Vagina (tissue), 2 donors: ENCODE measurements at regions of chr15 and their contacts with region 1.

Region 1: DNA sequence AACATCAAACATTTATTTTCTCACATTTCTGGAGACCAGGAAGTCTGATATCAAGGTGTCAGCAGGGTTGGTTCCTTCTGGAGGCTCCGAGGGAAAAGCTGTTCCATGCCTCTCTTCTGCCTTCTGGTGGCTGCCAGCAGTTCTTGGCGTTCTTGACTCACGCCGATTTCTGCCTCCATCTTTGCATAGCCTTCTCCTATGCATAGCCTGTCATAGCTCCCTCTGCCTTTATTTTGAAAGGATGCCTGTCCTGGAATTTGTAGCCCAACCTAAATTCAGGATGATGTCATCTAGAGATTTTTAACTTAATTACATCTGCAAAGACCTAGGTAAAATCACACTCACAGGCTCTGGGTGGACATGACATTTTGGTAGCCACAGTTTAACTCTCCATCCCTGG is 70.4 kb downstream of the RGMA start:
- DNase-seq: no peak
- H3K4me3 ChIP-seq: no peak overlapping the region
- H3K27ac ChIP-seq: no peak overlapping the region
- H3K4me1 ChIP-seq: no peaks in the 10 kb centered on the region
- H3K27me3 ChIP-seq: no peaks in the 10 kb centered on the region
- CTCF ChIP-seq: no peak
- POLR2A ChIP-seq: no peak

Region 2: GRCh38 chr15:92733934-92734521 is 284.6 kb before region 1 on chr15:
- intact Hi-C with region 1: no loop called
- DNase-seq: no peak
- H3K4me3 ChIP-seq: peak overlapping the region in 1 of 2 donors; percentile 35
- H3K27ac ChIP-seq: peak overlapping the region; percentile 53
- H3K4me1 ChIP-seq: no peaks in the 10 kb centered on the region
- H3K27me3 ChIP-seq: no peaks in the 10 kb centered on the region
- CTCF ChIP-seq: no peak
- POLR2A ChIP-seq: no peak

Region 3: GRCh38 chr15:92954578-92954977 is 64.0 kb before region 1 on chr15:
- intact Hi-C with region 1: loop called (anchors 10 kb)
- DNase-seq: no peak
- H3K4me3 ChIP-seq: no peak overlapping the region
- H3K27ac ChIP-seq: no peak overlapping the region
- H3K4me1 ChIP-seq: no peaks in the 10 kb centered on the region
- H3K27me3 ChIP-seq: no peaks in the 10 kb centered on the region
- CTCF ChIP-seq: no peak
- POLR2A ChIP-seq: no peak